Activated CD8-positive, alpha-beta T cell treated with anti-CD3 and anti-CD28 coated beads for 36 hours (primary cell): ENCODE measurements at regions of chr3 and their contacts with region 1.

Region 1: DNA sequence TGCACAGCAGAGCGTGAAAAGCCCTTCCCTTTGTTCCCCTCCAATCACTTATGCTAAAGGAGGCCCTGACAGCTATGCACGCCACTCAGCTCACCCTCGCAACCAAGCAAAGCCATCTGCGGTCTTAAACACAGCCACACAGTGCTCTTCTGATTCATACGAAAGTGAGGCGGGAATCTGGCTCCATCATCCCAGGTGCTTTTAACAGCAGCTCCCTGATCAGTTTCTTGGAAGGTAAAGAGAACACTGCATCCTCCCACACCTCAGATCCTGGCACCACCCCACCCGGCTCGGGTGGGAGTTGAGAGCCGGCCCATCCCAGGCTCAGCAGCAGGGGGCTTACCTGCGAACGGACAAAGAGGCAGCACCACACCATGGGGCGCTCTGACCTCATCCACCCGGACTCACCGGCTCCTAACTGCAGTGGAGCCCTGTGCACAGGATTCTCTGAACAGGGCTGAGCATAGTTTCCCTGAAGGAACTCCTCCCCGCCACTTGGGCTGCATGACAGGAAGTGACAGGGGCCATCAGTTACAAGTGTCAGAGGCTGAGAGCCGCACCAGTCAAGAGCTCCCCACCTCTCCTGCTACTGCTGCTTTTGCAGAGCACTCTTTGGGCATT is 114.3 kb upstream of the ARHGEF3 start:
- DNase-seq: peak; percentile 90
- ATAC-seq: peak; percentile 86
- H3K4me3 Mint-ChIP-seq: peak overlapping the region; percentile 82
- H3K27ac Mint-ChIP-seq: peak overlapping the region; percentile 91
- H3K4me1 Mint-ChIP-seq: peaks cover 65% of the 10 kb centered on the region
- H3K27me3 Mint-ChIP-seq: no peaks in the 10 kb centered on the region
- CTCF ChIP-seq: no peak

Region 2: DNA sequence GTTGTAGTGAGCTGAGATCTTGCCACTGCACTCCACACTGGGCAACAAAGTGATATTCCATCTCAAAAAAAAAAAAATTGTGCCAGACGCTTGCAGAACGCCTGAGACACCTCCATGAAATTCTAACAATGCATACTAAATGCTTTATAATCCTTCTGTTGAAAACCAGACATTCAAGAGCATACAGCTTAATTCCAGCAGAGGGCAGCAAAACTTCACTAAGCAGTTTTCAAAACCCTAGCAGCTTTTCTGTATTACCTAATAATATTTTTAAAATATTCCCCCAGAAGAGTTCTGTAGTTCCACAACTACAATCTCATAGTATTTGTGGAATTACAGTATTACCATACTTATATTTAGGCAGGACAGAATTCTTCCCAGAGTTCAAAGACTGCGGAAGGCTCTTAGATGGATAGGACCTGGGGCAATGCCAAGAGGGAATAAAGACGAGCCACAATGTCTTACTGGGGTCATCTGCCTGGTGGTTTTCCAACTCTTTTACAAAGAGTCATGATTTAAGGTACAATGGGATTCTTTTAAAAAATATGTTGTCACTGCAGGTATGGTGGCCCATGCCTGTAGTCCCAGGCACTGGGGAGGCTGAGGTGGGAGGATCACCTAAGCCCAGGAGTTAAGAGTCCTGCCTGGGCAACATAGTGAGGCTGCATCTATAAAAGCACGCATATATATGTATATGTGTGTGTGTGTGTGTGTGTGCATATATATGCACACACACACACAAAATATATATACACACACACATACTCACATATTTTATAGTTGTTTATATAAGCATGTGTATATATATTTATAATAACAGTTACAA is 213.4 kb before region 1 on chr3:
- CTCF ChIA-PET with region 1: interaction called, 5 read pairs
- POLR2A ChIA-PET with region 1: no interaction called
- intact Hi-C with region 1: loop called (anchors 10 kb)
- DNase-seq: peak; percentile 68
- ATAC-seq: peak; percentile 65
- H3K4me3 Mint-ChIP-seq: no peak overlapping the region
- H3K27ac Mint-ChIP-seq: no peak overlapping the region
- H3K4me1 Mint-ChIP-seq: peaks cover 22% of the 10 kb centered on the region
- H3K27me3 Mint-ChIP-seq: no peaks in the 10 kb centered on the region
- CTCF ChIP-seq: peak; percentile 96

Region 3: GRCh38 chr3:56790016-56790821 is 125.9 kb before region 1 on chr3:
- CTCF ChIA-PET with region 1: interaction called, 3 read pairs
- POLR2A ChIA-PET with region 1: interaction called, 13 read pairs
- intact Hi-C with region 1: loop called (anchors 5 kb)
- DNase-seq: peak; percentile 55
- ATAC-seq: peak; percentile 57
- H3K4me3 Mint-ChIP-seq: peak overlapping the region; percentile 43
- H3K27ac Mint-ChIP-seq: peak overlapping the region; percentile 92
- H3K4me1 Mint-ChIP-seq: peaks cover 86% of the 10 kb centered on the region
- H3K27me3 Mint-ChIP-seq: no peaks in the 10 kb centered on the region
- CTCF ChIP-seq: no peak

Region 4: GRCh38 chr3:56796202-56796601 is 119.9 kb before region 1 on chr3:
- CTCF ChIA-PET with region 1: interaction called, 72 read pairs
- POLR2A ChIA-PET with region 1: interaction called, 25 read pairs
- intact Hi-C with region 1: loop called (anchors 5 kb)
- DNase-seq: peak; percentile 52
- ATAC-seq: peak; percentile 31
- H3K4me3 Mint-ChIP-seq: peak overlapping the region; percentile 87
- H3K27ac Mint-ChIP-seq: peak overlapping the region; percentile 87
- H3K4me1 Mint-ChIP-seq: peaks cover 59% of the 10 kb centered on the region
- H3K27me3 Mint-ChIP-seq: no peaks in the 10 kb centered on the region
- CTCF ChIP-seq: no peak

Region 5: DNA sequence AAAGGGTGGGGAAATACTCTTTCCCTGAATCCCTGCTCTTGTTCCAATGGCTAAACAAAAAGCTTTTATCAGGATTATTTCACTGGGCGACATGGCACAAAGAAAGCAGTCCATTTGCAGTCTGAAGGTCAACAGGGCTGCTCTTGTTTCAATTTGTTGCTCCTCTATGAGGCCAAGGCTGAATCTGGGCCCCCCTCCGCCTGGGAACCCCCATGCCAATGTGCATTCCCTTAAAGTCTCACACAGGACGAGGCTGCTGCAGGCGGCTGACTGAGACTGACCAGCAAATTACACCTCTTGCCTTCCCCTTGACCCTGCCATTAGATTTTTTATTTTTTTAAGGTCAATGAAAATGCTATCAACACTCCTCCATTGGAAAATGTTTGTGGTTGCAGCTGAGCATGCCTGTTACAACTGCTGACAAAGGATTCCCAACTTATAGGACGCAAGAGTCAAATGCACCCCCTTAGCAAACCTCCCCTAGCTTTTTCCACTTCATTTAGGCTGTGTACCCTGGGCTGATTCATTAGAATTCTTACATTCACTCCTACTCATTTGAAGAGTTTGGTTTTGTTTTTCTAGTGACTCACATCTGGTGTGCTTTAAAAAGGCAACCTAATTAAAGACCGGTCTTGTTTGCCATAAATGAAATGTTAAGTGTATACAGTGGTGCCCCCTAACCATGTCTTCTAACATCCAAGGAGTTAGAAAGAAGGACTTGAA is 53.6 kb before region 1 on chr3:
- CTCF ChIA-PET with region 1: no interaction called
- POLR2A ChIA-PET with region 1: interaction called, 21 read pairs
- intact Hi-C with region 1: no loop called
- DNase-seq: peak; percentile 62
- ATAC-seq: peak; percentile 75
- H3K4me3 Mint-ChIP-seq: peak overlapping the region; percentile 28
- H3K27ac Mint-ChIP-seq: peak overlapping the region; percentile 87
- H3K4me1 Mint-ChIP-seq: peaks cover 75% of the 10 kb centered on the region
- H3K27me3 Mint-ChIP-seq: no peaks in the 10 kb centered on the region
- CTCF ChIP-seq: no peak

Region 6: GRCh38 chr3:56878074-56878473 is 38.0 kb before region 1 on chr3:
- CTCF ChIA-PET with region 1: interaction called, 4 read pairs
- POLR2A ChIA-PET with region 1: interaction called, 79 read pairs
- intact Hi-C with region 1: loop called (anchors 2 kb)
- DNase-seq: peak; percentile 86
- ATAC-seq: peak; percentile 85
- H3K4me3 Mint-ChIP-seq: peak overlapping the region; percentile 64
- H3K27ac Mint-ChIP-seq: peak overlapping the region; percentile 97
- H3K4me1 Mint-ChIP-seq: peaks cover 88% of the 10 kb centered on the region
- H3K27me3 Mint-ChIP-seq: no peaks in the 10 kb centered on the region
- CTCF ChIP-seq: no peak

Region 7: DNA sequence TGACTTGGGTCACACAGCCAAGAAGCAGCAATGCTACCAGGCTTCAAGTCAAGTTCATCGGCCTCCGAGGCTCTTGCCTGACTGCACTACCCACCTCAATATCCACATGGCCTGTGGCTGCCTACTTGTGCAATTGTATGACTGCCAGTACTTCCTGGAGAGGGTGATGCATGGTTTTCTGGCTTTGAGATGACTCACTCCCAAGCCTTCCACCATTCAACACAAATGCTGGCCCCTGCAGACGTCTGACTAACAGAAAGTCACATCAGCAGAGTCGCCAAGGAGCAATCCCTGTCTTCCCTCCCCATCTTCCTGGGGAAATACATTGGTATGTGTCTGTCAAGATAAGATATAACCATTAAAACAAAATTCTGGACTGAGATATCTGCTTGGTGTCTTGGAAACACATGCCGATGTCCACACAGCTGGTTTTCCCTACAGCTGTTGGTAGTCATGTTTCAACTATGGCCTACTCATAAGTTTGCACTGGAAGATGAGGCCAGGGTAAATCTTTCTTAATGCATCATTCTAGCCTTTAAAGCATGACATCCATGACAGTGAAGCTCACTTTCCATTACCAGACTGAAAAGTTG is 64.8 kb after region 1 on chr3:
- CTCF ChIA-PET with region 1: interaction called, 3 read pairs
- POLR2A ChIA-PET with region 1: interaction called, 5 read pairs
- intact Hi-C with region 1: loop called (anchors 2 kb)
- DNase-seq: peak; percentile 83
- ATAC-seq: peak; percentile 96
- H3K4me3 Mint-ChIP-seq: no peak overlapping the region
- H3K27ac Mint-ChIP-seq: peak overlapping the region; percentile 43
- H3K4me1 Mint-ChIP-seq: peaks cover 35% of the 10 kb centered on the region
- H3K27me3 Mint-ChIP-seq: no peaks in the 10 kb centered on the region
- CTCF ChIP-seq: no peak

Region 8: DNA sequence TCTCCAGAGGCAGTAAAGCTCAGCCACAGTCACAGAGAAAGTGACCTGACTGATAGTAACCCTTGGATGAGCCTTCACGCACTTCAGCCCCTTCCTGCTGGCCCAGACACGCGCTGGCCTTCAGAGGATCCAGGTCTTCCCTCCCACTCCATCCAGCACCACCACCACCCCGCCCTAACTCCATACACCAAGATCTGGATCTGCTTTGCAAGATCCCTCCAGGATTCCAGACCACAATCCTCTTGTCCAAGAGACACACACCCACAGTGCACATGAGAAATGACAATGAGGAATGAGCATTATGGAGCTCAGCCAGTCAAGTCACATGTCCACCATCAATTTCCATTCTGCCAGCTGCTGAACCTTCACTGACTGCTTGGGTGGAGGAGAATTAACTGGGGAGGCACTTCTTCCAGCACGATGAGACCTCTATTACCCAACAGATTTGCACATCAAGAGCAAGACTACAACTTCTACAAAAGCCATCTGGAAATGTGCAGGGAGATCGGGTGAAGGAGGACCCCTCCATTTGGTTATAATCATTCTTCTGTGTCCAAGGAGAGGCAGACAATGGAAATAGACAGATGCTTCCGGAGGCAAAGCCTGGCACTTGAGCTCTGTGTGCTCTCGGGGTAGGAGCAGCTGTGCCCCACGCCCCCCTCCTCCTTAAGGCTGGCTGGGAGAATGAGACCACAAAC is 132.0 kb after region 1 on chr3:
- CTCF ChIA-PET with region 1: no interaction called
- POLR2A ChIA-PET with region 1: no interaction called
- intact Hi-C with region 1: no loop called
- DNase-seq: no peak
- ATAC-seq: no peak
- H3K4me3 Mint-ChIP-seq: no peak overlapping the region
- H3K27ac Mint-ChIP-seq: no peak overlapping the region
- H3K4me1 Mint-ChIP-seq: no peaks in the 10 kb centered on the region
- H3K27me3 Mint-ChIP-seq: no peaks in the 10 kb centered on the region
- CTCF ChIP-seq: no peak